ENCODE measurements at regions of chr10 and their contacts with region 1.

Region 1: GRCh38 chr10:17617031-17617911 is at the start of gene HACD1:
- DNase-seq: peak in 13 of 14 experiments; percentile 5 to 68 (median 37)
- ATAC-seq: peak; percentile 73
- H3K4me3 ChIP-seq: peak within 1 kb of the TSS; percentile 66
- H3K4me3 Mint-ChIP-seq: peak within 1 kb of the TSS; percentile 92
- H3K27ac ChIP-seq: no peak within 1 kb of the TSS
- H3K27ac Mint-ChIP-seq: no peak within 1 kb of the TSS
- H3K4me1 ChIP-seq: peaks cover 13% of the 10 kb centered on the region
- H3K4me1 Mint-ChIP-seq: peaks cover 6% of the 10 kb centered on the region
- H3K27me3 ChIP-seq: peaks cover 0 to 5% of the 10 kb centered on the region in 2 experiments
- H3K27me3 Mint-ChIP-seq: peaks cover 18% of the 10 kb centered on the region
- CTCF ChIP-seq: no peak
- total RNA-seq, gene HACD1: 0.75 to 0.77 TPM

Region 2: DNA sequence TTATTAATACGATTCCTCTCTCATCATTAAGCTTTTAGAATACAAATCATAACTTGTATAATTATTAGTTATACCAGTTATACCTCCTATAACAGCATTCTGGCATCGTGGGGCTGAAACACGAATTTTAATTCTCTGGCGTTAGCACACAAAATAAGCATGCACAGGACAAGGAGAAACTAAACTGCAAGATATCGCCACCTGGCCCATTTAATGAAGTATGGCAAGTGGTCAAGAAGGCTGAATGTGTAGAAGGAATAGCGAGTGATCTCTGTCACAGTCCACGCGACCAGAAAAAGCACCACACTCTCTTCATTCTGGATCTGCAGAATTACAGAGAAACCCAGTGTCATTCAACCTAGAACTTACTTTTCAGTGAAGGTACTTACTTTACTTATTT is 18.2 kb before region 1 on chr10:
- CTCF ChIA-PET with region 1: no interaction called
- POLR2A ChIA-PET with region 1: no interaction called
- intact Hi-C with region 1: no loop called
- DNase-seq: peak in 2 of 14 experiments; percentile 11 to 27
- ATAC-seq: no peak
- H3K4me3 ChIP-seq: no peak overlapping the region
- H3K4me3 Mint-ChIP-seq: no peak overlapping the region
- H3K27ac ChIP-seq: no peak overlapping the region
- H3K27ac Mint-ChIP-seq: no peak overlapping the region
- H3K4me1 ChIP-seq: no peaks in the 10 kb centered on the region
- H3K4me1 Mint-ChIP-seq: no peaks in the 10 kb centered on the region
- H3K27me3 ChIP-seq: no peaks in the 10 kb centered on the region
- H3K27me3 Mint-ChIP-seq: no peaks in the 10 kb centered on the region
- CTCF ChIP-seq: no peak

Region 3: GRCh38 chr10:17684537-17684936 is 67.3 kb after region 1 on chr10:
- CTCF ChIA-PET with region 1: no interaction called
- POLR2A ChIA-PET with region 1: no interaction called
- intact Hi-C with region 1: loop called in 1 of 2 experiments (anchors 2 kb)
- DNase-seq: peak in 2 of 14 experiments; percentile 28 to 32
- ATAC-seq: no peak
- H3K4me3 ChIP-seq: peak overlapping the region; percentile 4
- H3K4me3 Mint-ChIP-seq: no peak overlapping the region
- H3K27ac ChIP-seq: no peak overlapping the region
- H3K27ac Mint-ChIP-seq: peak overlapping the region; percentile 47
- H3K4me1 ChIP-seq: peaks cover 5% of the 10 kb centered on the region
- H3K4me1 Mint-ChIP-seq: peaks cover 53% of the 10 kb centered on the region
- H3K27me3 ChIP-seq: no peaks in the 10 kb centered on the region
- H3K27me3 Mint-ChIP-seq: no peaks in the 10 kb centered on the region
- CTCF ChIP-seq: no peak

Region 4: GRCh38 chr10:18424200-18424599 is 806.9 kb after region 1 on chr10:
- CTCF ChIA-PET with region 1: no interaction called
- POLR2A ChIA-PET with region 1: no interaction called
- intact Hi-C with region 1: no loop called
- DNase-seq: no peak
- ATAC-seq: no peak
- H3K4me3 ChIP-seq: no peak overlapping the region
- H3K4me3 Mint-ChIP-seq: no peak overlapping the region
- H3K27ac ChIP-seq: no peak overlapping the region
- H3K27ac Mint-ChIP-seq: no peak overlapping the region
- H3K4me1 ChIP-seq: no peaks in the 10 kb centered on the region
- H3K4me1 Mint-ChIP-seq: no peaks in the 10 kb centered on the region
- H3K27me3 ChIP-seq: no peaks in the 10 kb centered on the region
- H3K27me3 Mint-ChIP-seq: peaks cover 4% of the 10 kb centered on the region
- CTCF ChIP-seq: no peak

Measured in CD4-positive, alpha-beta T cell (primary cell).